ENCODE measurements at regions of chr3 and their contacts with region 1.

Region 1: DNA sequence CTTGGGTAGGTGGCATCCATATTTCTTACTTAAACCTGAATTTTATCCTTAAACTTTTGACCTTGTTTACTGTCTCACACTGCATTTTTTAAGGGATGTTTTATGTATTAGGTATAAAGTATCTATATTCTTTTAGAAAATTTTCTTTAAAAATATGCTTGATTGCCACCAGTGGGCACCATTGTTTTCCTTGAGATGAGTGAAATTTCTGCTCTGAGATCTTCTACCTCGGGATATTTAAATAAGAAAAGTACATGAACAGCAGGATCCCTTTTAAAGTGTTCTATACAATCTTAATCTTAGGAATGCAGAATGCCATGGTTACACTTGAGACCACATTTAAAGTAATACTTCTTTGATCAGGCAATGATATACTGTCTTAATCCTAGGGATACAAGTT is 108.7 kb downstream of the SLMAP start:
- DNase-seq: no peak
- H3K4me3 Mint-ChIP-seq: no peak overlapping the region
- H3K27ac Mint-ChIP-seq: no peak overlapping the region
- H3K4me1 Mint-ChIP-seq: no peaks in the 10 kb centered on the region
- H3K27me3 Mint-ChIP-seq: no peaks in the 10 kb centered on the region

Region 2: GRCh38 chr3:58177747-58178527 is 313.1 kb after region 1 on chr3:
- CTCF ChIA-PET with region 1: no interaction called
- intact Hi-C with region 1: loop called (anchors 5 kb)
- DNase-seq: peak; percentile 95
- H3K4me3 Mint-ChIP-seq: peak overlapping the region; percentile 59
- H3K27ac Mint-ChIP-seq: no peak overlapping the region
- H3K4me1 Mint-ChIP-seq: peaks cover 13% of the 10 kb centered on the region
- H3K27me3 Mint-ChIP-seq: peaks cover 6% of the 10 kb centered on the region